ENCODE measurements at regions of chr12 and their contacts with region 1.

Region 1: GRCh38 chr12:53321074-53321814 is at the start of gene AAAS:
- DNase-seq: peak; percentile 96 to 99 (median 97)
- ATAC-seq: peak; percentile 90
- H3K4me3 ChIP-seq: peak within 1 kb of the TSS; percentile 75
- H3K27ac ChIP-seq: peak within 1 kb of the TSS; percentile 97
- H3K4me1 ChIP-seq: peaks cover 29 to 42% of the 10 kb centered on the region in 2 experiments
- H3K27me3 ChIP-seq: no peaks in the 10 kb centered on the region
- CTCF ChIP-seq: peak; percentile 87 to 99 (median 95)
- EP300 ChIP-seq: peak; percentile 69
- POLR2A ChIP-seq: peak; percentile 99
- RAD21 ChIP-seq: peak; percentile 60 to 61
- polyA plus RNA-seq, gene AAAS: 124 to 157 TPM

Region 2: GRCh38 chr12:53090563-53090962 is 230.7 kb before region 1 on chr12:
- CTCF ChIA-PET with region 1: no interaction called
- POLR2A ChIA-PET with region 1: no interaction called
- in situ Hi-C with region 1: no loop called
- intact Hi-C with region 1: no loop called
- DNase-seq: peak in 1 of 4 experiments; percentile 5
- ATAC-seq: peak; percentile 35; the same call in 1 of the 3 replicates
- H3K4me3 ChIP-seq: no peak overlapping the region
- H3K27ac ChIP-seq: no peak overlapping the region
- H3K4me1 ChIP-seq: peaks cover 6 to 11% of the 10 kb centered on the region in 2 experiments
- H3K27me3 ChIP-seq: no peaks in the 10 kb centered on the region
- CTCF ChIP-seq: no peak
- EP300 ChIP-seq: no peak
- POLR2A ChIP-seq: no peak
- RAD21 ChIP-seq: no peak

Region 3: DNA sequence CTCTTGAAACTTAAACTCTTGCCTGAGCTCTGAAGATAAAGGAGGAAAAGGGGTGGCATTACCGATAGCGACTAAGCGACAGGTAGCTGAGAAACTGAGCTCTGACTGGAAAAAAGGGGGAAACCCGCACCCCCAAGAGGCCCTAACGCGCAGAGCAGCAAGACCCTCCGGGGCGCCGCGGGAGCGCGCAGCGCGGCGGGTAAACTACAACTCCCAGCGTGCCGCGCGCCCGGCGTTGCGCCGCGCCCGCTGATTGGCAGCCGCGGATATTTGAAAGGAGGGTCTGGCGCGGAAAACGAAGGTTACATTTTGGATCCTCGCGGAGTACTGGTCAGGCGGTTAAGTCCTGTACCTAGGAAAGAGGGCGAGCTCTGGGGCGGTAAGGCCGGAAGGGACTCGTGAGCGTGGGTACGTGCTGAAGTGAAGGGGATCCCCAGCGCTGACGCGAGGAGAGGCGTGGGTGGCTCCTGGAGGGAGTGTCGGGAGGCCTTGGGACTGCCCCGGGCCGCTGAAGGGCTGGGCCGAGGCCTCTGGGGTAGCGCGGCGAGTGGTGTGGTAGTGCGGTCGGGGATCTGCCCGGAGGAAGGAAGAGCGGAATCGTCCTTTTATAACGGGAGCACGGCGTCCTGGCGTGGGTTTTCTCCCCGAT is 53.1 kb before region 1 on chr12 and contains the start of gene ESPL1:
- CTCF ChIA-PET with region 1: no interaction called
- POLR2A ChIA-PET with region 1: interaction called, 5 read pairs
- in situ Hi-C with region 1: no loop called
- intact Hi-C with region 1: loop called (anchors 2 kb)
- DNase-seq: peak; percentile 90 to 95 (median 92)
- ATAC-seq: peak; percentile 93
- H3K4me3 ChIP-seq: peak within 1 kb of the TSS; percentile 64
- H3K27ac ChIP-seq: peak within 1 kb of the TSS; percentile 79
- H3K4me1 ChIP-seq: peaks cover 24 to 43% of the 10 kb centered on the region in 2 experiments; a peak in 4 of 5 replicates
- H3K27me3 ChIP-seq: no peaks in the 10 kb centered on the region
- CTCF ChIP-seq: peak; percentile 65 to 69 (median 65)
- EP300 ChIP-seq: 0 out of 2 replicates have a peak, but pooled peaks have one; percentile 9
- POLR2A ChIP-seq: peak; percentile 64
- RAD21 ChIP-seq: peak; percentile 51 to 65
- polyA plus RNA-seq, gene ESPL1: 1.2 to 1.6 TPM

Region 4: DNA sequence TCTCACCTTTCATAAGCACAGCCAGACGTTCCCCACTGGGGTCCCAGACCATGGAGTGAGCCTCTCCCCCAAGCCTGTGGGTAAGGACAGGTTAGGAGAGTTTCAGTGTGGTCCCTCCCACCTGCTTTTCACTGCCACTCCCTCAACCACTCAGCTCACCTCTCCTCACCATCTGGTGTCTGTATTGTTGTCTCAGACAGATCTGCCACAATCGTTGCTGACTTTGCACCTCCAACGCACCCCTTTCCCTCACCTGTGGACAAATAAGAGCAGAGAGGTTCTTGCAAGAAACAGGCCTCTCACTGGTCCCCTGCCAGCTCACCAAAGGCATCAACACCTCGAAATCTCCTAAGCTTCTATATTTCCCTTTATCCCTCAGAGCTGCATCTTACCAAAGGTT is 13.0 kb before region 1 on chr12:
- CTCF ChIA-PET with region 1: no interaction called
- POLR2A ChIA-PET with region 1: interaction called, 38 read pairs
- in situ Hi-C with region 1: no loop called
- intact Hi-C with region 1: no loop called
- DNase-seq: no peak
- ATAC-seq: no peak
- H3K4me3 ChIP-seq: no peak overlapping the region
- H3K27ac ChIP-seq: peak overlapping the region; percentile 70; the same call in 2 of the 3 replicates
- H3K4me1 ChIP-seq: peaks cover 14 to 17% of the 10 kb centered on the region in 2 experiments; a peak in 4 of 5 replicates
- H3K27me3 ChIP-seq: no peaks in the 10 kb centered on the region
- CTCF ChIP-seq: no peak
- EP300 ChIP-seq: no peak
- POLR2A ChIP-seq: no peak
- RAD21 ChIP-seq: no peak

Region 5: GRCh38 chr12:53344824-53345485 is 23.7 kb after region 1 on chr12:
- CTCF ChIA-PET with region 1: interaction called, 4 read pairs
- POLR2A ChIA-PET with region 1: interaction called, 9 read pairs
- in situ Hi-C with region 1: no loop called
- intact Hi-C with region 1: loop called (anchors 1 kb)
- DNase-seq: peak; percentile 83 to 93 (median 88)
- ATAC-seq: peak; percentile 97
- H3K4me3 ChIP-seq: peak overlapping the region; percentile 48
- H3K27ac ChIP-seq: no peak overlapping the region
- H3K4me1 ChIP-seq: peaks cover 14 to 23% of the 10 kb centered on the region in 2 experiments; a peak in 4 of 5 replicates
- H3K27me3 ChIP-seq: no peaks in the 10 kb centered on the region
- CTCF ChIP-seq: peak; percentile 84 to 88 (median 87)
- EP300 ChIP-seq: no peak
- POLR2A ChIP-seq: 0 out of 2 replicates have a peak, but pooled peaks have one; percentile 24
- RAD21 ChIP-seq: peak; percentile 92 to 96

Region 6: GRCh38 chr12:53500776-53501614 is 179.8 kb after region 1 on chr12 and contains the start of gene TARBP2:
- CTCF ChIA-PET with region 1: interaction called, 3 read pairs
- POLR2A ChIA-PET with region 1: interaction called, 17 read pairs
- in situ Hi-C with region 1: loop called (anchors 10 kb)
- intact Hi-C with region 1: loop called (anchors 1 kb)
- DNase-seq: peak; percentile 85 to 98 (median 88)
- ATAC-seq: peak; percentile 86
- H3K4me3 ChIP-seq: peak within 1 kb of the TSS; percentile 79
- H3K27ac ChIP-seq: peak within 1 kb of the TSS; percentile 97
- H3K4me1 ChIP-seq: peaks cover 33 to 47% of the 10 kb centered on the region in 2 experiments; a peak in 4 of 5 replicates
- H3K27me3 ChIP-seq: no peaks in the 10 kb centered on the region
- CTCF ChIP-seq: no peak
- EP300 ChIP-seq: no peak
- POLR2A ChIP-seq: peak; percentile 96
- RAD21 ChIP-seq: no peak
- polyA plus RNA-seq, gene TARBP2: 5.6 to 16.6 TPM

Measured in K562 (cell line).